ENCODE measurements at regions of chr22 and their contacts with region 1.

Region 1: DNA sequence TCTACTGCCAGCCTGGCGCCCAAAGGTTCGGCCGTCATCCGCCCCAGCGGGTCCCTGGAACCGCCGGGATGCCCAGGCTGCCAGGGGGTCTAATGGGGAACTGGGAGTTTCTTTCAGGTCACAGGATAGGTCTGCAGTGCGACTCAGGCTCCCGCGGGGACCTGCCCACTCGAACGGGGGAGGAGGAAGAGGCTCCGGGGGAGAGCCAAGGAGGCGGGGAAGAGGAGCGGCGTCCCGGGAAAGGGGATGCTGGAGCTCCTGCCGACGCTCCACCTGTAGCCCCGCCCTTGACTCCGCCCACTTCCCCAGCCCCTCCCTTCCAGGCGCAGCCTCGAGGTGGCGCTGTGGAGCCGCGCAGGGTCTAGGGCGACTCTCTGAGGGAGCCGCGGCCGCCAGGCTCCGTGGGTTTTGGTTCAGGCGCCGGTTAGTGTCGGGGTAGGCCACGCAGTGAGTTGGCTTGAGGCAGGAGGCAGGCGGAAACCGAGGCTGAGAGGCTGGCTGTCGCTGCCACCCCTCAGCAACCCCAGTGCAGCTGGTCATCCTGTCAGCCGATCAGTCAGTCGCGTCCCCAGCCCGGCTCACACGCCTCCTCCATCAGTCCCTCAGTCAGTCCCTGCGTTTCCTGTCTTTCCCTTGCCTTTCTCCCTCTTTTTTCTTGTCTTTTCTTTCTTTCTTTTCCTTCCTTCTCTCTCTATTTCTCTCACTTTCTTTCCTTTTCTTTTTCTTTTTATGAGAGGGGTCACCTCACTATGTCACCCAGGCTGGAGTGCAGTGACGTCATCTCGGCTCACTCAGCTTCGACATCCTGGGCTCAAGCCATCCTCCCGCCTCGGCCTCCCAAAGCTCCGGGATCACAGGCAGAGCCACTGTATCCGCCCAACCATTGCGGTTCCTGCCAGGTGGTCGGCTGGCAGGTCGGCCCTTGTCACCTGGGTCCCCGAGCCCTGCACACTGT is 26.4 kb downstream of the YWHAH start:
- DNase-seq: peak; percentile 36
- ATAC-seq: peak; percentile 92
- H3K4me3 ChIP-seq: peak overlapping the region; percentile 49 to 67
- H3K27ac ChIP-seq: no peak overlapping the region
- H3K4me1 ChIP-seq: 0 out of 2 replicates have a peak, but pooled peaks cover 2% of the 10 kb centered on the region
- H3K27me3 ChIP-seq: no peaks in the 10 kb centered on the region
- CTCF ChIP-seq: peak; percentile 95

Region 2: GRCh38 chr22:32265882-32266767 is 295.4 kb after region 1 on chr22:
- CTCF ChIA-PET with region 1: no interaction called
- POLR2A ChIA-PET with region 1: no interaction called
- in situ Hi-C with region 1: no loop called
- intact Hi-C with region 1: loop called (anchors 10 kb)
- DNase-seq: peak; percentile 25
- ATAC-seq: no peak
- H3K4me3 ChIP-seq: no peak overlapping the region
- H3K27ac ChIP-seq: no peak overlapping the region
- H3K4me1 ChIP-seq: no peaks in the 10 kb centered on the region
- H3K27me3 ChIP-seq: no peaks in the 10 kb centered on the region; the same call in 1 of the 2 replicates
- CTCF ChIP-seq: peak; percentile 86